Activated CD4-positive, alpha-beta T cell treated with anti-CD3 and anti-CD28 coated beads for 36 hours (primary cell): ENCODE measurements at regions of chr12 and their contacts with region 1.

Region 1: GRCh38 chr12:111993292-111994150 is 19.4 kb downstream of the TMEM116 start:
- DNase-seq: peak; percentile 40
- ATAC-seq: peak; percentile 75
- H3K4me3 Mint-ChIP-seq: peak overlapping the region; percentile 68
- H3K27ac Mint-ChIP-seq: peak overlapping the region; percentile 52
- H3K4me1 Mint-ChIP-seq: peaks cover 68% of the 10 kb centered on the region
- H3K27me3 Mint-ChIP-seq: no peaks in the 10 kb centered on the region

Region 2: DNA sequence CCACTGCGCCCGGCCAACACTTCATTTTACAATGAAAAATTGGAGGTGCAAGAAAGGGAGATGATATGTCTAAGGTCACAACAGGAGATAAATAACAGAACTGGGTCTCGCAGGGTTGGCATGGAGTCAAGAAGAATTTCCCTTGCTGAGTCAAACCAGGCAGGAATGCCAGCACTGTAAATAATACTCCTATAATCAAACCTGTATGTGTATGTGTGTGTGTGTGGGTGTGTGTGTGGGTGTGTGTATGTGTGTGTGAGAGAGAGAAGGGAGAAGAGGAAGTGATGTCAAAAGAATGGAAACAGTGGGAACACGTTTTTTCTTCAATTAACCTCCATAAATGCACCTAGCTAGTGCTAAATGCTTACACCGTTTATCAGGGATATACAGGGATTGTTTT is 51.0 kb before region 1 on chr12:
- CTCF ChIA-PET with region 1: interaction called, 3 read pairs
- POLR2A ChIA-PET with region 1: no interaction called
- intact Hi-C with region 1: loop called in 1 of 2 experiments (anchors 5 kb)
- DNase-seq: peak; percentile 7
- ATAC-seq: no peak
- H3K4me3 Mint-ChIP-seq: no peak overlapping the region
- H3K27ac Mint-ChIP-seq: peak overlapping the region; percentile 77
- H3K4me1 Mint-ChIP-seq: peaks cover 15% of the 10 kb centered on the region
- H3K27me3 Mint-ChIP-seq: no peaks in the 10 kb centered on the region

Region 3: DNA sequence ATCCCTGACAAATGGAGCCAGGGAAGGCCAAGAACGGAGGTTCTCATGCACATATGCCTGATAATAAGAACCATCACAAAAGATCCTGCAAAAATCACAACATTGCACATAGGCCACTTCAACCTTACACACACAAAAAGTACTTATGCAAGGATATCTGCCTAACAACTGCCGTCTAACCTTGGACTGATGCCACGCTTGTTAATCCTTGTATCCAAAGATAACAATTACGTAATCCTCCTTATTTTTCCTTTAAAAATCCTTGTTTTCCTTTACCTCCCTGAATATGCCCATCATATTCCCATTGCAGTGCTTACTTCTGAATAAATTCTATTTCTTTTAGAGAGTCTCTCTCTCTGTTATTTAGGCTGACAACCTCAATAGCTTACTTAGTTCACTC is 40.1 kb before region 1 on chr12:
- CTCF ChIA-PET with region 1: no interaction called
- POLR2A ChIA-PET with region 1: no interaction called
- intact Hi-C with region 1: loop called (anchors 5 kb)
- DNase-seq: no peak
- ATAC-seq: no peak
- H3K4me3 Mint-ChIP-seq: no peak overlapping the region
- H3K27ac Mint-ChIP-seq: no peak overlapping the region
- H3K4me1 Mint-ChIP-seq: peaks cover 17% of the 10 kb centered on the region
- H3K27me3 Mint-ChIP-seq: no peaks in the 10 kb centered on the region

Region 4: DNA sequence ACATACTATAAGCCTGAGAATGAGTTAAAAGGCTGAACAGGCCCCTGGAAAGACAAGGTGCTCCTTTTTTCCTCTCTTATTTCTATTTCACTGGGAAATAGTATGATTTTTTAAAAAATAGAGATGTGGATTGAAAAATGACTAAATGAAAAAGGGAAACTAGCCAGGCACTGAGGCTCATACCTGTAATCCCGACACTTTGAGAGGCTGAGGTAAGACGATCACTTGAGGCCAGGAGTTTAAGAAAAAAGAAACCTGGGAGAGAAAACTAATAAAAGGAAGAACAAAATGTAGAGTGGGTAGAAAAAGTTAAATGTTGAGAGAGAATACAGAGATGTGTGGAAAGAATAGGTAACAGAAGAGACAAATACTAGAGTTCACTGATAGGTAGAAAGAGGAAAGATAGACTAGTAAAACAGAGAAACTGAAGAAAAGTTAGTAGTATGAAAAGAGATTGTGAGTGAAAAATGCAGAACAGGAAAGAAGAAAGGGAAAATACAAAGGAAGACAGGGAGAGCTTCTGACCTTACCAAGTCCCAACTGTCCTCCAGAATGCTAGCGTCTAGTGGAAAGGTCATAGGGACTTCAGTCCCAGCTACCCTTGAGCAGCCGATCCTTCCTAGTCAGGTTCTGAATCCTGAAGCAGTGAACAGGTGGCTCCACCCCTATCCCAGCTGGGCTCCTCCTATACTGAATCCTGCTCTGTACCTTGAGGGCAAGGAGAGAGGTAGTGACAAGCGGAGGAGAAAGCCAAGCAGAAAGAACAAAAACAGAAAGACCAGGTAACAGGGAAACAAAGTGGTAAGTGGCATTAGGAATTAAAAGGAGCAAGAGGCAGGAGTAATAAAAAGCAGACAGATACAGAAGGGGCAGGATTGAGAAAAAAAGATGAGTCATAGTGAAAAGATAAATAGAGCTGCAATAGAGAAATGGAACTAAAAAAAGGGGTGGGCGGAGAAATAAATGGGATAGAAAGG is 12.2 kb after region 1 on chr12:
- CTCF ChIA-PET with region 1: interaction called, 5 read pairs
- POLR2A ChIA-PET with region 1: no interaction called
- intact Hi-C with region 1: loop called in 1 of 2 experiments (anchors 1 kb)
- DNase-seq: no peak
- ATAC-seq: no peak
- H3K4me3 Mint-ChIP-seq: no peak overlapping the region
- H3K27ac Mint-ChIP-seq: no peak overlapping the region
- H3K4me1 Mint-ChIP-seq: peaks cover 54% of the 10 kb centered on the region
- H3K27me3 Mint-ChIP-seq: no peaks in the 10 kb centered on the region

Region 5: GRCh38 chr12:112049351-112049750 is 55.8 kb after region 1 on chr12:
- CTCF ChIA-PET with region 1: no interaction called
- POLR2A ChIA-PET with region 1: no interaction called
- intact Hi-C with region 1: no loop called
- DNase-seq: no peak
- ATAC-seq: no peak
- H3K4me3 Mint-ChIP-seq: no peak overlapping the region
- H3K27ac Mint-ChIP-seq: no peak overlapping the region
- H3K4me1 Mint-ChIP-seq: peaks cover 7% of the 10 kb centered on the region
- H3K27me3 Mint-ChIP-seq: no peaks in the 10 kb centered on the region

Region 6: GRCh38 chr12:112183141-112184021 is 189.9 kb after region 1 on chr12:
- CTCF ChIA-PET with region 1: no interaction called
- POLR2A ChIA-PET with region 1: no interaction called
- intact Hi-C with region 1: no loop called
- DNase-seq: peak; percentile 57
- ATAC-seq: peak; percentile 84
- H3K4me3 Mint-ChIP-seq: no peak overlapping the region
- H3K27ac Mint-ChIP-seq: peak overlapping the region; percentile 53
- H3K4me1 Mint-ChIP-seq: peaks cover 18% of the 10 kb centered on the region
- H3K27me3 Mint-ChIP-seq: no peaks in the 10 kb centered on the region